ENCODE measurements at regions of chr20 and their contacts with region 1.

Region 1: GRCh38 chr20:35648836-35649235 is 15.9 kb downstream of the CPNE1 start:
- DNase-seq: no peak
- H3K4me3 ChIP-seq: no peak overlapping the region
- H3K27ac ChIP-seq: no peak overlapping the region
- H3K4me1 ChIP-seq: no peaks in the 10 kb centered on the region
- H3K27me3 ChIP-seq: no peaks in the 10 kb centered on the region
- CTCF ChIP-seq: no peak
- EP300 ChIP-seq: no peak
- POLR2A ChIP-seq: no peak
- RAD21 ChIP-seq: no peak

Region 2: DNA sequence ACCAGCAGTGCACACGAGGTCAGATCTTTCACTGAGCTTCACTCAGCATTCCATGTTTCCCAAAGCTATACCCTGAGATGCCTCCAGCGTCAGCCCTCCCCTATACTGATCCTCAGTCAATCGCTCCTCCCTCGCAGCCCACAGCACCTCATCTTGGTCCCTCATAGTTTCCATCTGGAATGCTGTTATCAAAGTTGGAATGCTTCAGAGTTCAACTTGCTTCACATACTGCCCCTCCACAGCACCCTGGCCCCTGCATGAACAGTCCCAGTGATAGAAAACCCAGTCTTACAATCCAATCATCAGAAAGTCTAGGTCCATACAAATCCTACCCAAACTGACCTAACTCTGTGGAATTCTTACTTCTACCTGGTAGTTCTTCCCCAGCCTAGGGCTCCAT is 13.2 kb before region 1 on chr20:
- CTCF ChIA-PET with region 1: interaction called, 4 read pairs
- POLR2A ChIA-PET with region 1: interaction called, 22 read pairs
- DNase-seq: peak in 1 of 2 experiments; percentile 31
- H3K4me3 ChIP-seq: no peak overlapping the region
- H3K27ac ChIP-seq: no peak overlapping the region
- H3K4me1 ChIP-seq: peaks cover 0 to 9% (median 2%) of the 10 kb centered on the region in 4 experiments; a peak in 3 of 7 replicates
- H3K27me3 ChIP-seq: no peaks in the 10 kb centered on the region
- CTCF ChIP-seq: no peak
- EP300 ChIP-seq: no peak
- POLR2A ChIP-seq: no peak
- RAD21 ChIP-seq: no peak